GM10248 (cell line): ENCODE measurements at regions of chr3 and their contacts with region 1.

Region 1: GRCh38 chr3:119294696-119295445 is 688 bp downstream of the ARHGAP31 start:
- DNase-seq: peak; percentile 52
- CTCF ChIP-seq: no peak

Region 2: DNA sequence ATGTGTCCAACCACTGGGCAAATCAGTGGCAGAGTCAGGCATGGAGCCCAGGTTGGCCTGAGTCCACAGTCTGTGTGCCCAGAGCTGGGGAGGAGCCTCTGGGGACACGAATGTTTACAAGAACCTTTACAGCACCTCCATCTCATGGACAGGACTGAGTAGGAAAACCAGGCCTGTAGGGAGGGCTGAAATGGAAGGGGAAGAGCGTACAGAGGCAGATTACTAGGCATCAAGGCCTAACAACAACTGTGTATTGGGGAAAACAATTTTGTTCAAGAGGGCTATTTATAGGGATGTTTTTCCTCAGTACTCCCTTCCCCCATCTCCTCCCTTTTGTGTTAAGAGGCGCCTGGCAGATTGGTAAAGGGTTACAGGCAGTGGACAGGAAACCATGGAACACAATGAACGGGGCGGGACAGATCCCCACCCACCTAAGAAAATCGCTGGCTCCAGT is 15.7 kb before region 1 on chr3:
- CTCF ChIA-PET with region 1: interaction called, 19 read pairs
- POLR2A ChIA-PET with region 1: no interaction called
- DNase-seq: no peak
- CTCF ChIP-seq: no peak

Region 3: GRCh38 chr3:119310071-119310470 is 15.2 kb after region 1 on chr3:
- CTCF ChIA-PET with region 1: interaction called, 10 read pairs
- POLR2A ChIA-PET with region 1: no interaction called
- DNase-seq: no peak
- CTCF ChIP-seq: no peak

Region 4: GRCh38 chr3:119352849-119353502 is 58.1 kb after region 1 on chr3:
- CTCF ChIA-PET with region 1: interaction called, 31 read pairs
- POLR2A ChIA-PET with region 1: no interaction called
- DNase-seq: no peak
- CTCF ChIP-seq: peak; percentile 31